PC-9 (cell line): ENCODE measurements at regions of chr2 and their contacts with region 1.

Region 1: DNA sequence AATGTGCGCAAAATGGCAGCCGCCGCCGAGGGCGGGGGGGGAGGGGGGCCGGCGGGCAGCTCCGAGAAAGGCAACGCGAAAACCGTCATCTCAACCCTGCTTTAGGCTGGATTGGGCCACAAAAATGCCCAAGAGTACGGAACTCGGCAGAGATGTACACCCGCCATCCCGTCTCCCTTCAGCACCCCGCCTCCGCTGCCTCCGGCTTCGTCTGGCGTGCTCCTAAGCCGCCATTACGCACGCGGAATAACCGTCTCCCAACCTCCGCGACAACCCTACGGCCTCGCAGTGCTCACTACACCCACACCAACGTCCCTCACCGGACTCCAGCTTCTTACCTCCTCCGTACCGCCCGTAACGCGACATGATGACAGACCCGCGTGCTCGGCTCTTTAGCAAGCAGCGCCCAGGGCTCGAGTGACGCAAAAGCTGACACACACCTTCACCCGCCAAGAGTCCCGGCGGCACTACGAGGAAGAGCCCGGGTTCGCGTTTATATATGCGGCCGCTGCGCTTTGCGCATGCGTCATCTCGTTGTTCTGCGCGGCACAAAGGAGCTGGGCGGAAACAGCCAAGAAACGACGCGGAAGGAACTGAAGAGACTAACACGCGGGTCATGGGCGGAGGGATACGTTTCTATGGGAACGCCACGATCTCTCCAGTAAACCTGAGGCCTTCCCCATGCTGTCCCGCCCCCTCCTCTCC is at the start of gene SRSF7:
- DNase-seq: peak; percentile 92 to 94
- H3K4me3 ChIP-seq: peak within 1 kb of the TSS; percentile 93
- H3K27ac ChIP-seq: peak within 1 kb of the TSS; percentile 88
- H3K4me1 ChIP-seq: peaks cover 27% of the 10 kb centered on the region
- H3K27me3 ChIP-seq: no peaks in the 10 kb centered on the region
- CTCF ChIP-seq: no peak
- total RNA-seq, gene SRSF7: 110 and 111 TPM in 2 replicates

Region 2: DNA sequence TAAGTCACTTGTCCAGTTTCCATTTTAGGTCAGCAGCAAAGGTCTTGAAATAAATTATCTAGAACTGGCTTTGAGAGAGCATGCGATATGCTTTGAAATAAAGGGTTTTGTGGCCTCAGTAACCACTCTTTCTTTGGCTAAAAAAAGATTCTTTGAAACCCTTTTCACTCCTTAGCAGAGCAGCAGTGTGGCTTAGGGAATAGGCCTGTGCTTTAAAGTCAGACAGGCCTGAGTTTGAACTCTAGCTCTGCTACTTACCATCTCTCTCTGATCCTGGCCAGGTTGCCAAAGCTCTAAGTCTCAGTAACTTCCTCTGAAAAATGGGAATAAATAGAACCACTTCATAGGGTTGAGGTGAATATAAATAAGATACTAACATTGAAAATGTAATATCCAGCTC is 1353.9 kb before region 1 on chr2:
- CTCF ChIA-PET with region 1: interaction called, 4 read pairs
- POLR2A ChIA-PET with region 1: interaction called, 16 read pairs
- intact Hi-C with region 1: no loop called
- DNase-seq: no peak
- H3K4me3 ChIP-seq: no peak overlapping the region
- H3K27ac ChIP-seq: no peak overlapping the region
- H3K4me1 ChIP-seq: 0 out of 2 replicates have a peak, but pooled peaks cover 4% of the 10 kb centered on the region
- H3K27me3 ChIP-seq: no peaks in the 10 kb centered on the region
- CTCF ChIP-seq: no peak

Region 3: DNA sequence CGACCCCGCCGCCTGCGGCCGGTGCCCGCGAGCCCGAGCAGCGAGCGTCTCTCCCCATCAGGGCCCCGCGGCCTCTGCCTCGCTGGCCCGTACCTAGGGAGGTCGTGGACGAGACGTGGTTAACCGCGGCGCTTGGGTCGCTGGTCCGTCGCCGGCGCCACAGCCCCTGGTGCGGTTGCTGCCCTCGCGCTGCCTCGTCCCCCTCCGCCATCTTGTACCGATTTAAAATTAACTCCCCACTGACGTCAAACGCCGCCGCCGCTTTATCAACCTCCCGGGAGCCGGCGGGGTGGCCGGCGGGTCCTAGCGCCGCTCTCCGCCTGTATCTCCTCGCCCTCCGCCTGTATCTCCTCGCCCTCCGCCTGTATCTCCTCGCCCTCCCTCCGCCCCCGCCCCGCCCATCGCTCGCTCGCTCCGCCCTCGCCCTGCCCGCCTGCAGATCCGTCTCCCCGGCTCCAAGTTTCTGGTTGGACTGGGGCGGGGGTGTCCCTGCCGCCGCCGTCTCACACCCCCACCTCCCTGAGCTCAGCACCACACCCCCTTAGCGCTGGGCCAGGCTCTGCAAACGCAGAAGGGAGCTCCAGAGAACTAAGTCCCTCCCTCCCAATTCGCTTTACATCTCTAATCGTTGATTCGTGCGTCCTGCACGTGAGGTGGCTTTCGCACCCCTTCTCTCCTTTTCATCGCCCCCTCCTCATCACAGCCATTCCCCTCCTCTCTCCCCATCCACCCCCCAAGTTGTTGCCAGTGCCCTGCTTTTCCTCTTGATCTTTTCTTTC is 373.8 kb before region 1 on chr2 and contains the start of gene ATL2:
- CTCF ChIA-PET with region 1: no interaction called
- POLR2A ChIA-PET with region 1: interaction called, 10 read pairs
- intact Hi-C with region 1: no loop called
- DNase-seq: peak; percentile 86 to 92
- H3K4me3 ChIP-seq: peak within 1 kb of the TSS; percentile 69
- H3K27ac ChIP-seq: peak within 1 kb of the TSS; percentile 78
- H3K4me1 ChIP-seq: peaks cover 28% of the 10 kb centered on the region
- H3K27me3 ChIP-seq: no peaks in the 10 kb centered on the region
- CTCF ChIP-seq: 0 out of 2 replicates have a peak, but pooled peaks have one; percentile 10
- total RNA-seq, gene ATL2: 66.4 and 75.3 TPM in 2 replicates

Region 4: GRCh38 chr2:38765149-38765548 is 14.1 kb after region 1 on chr2:
- CTCF ChIA-PET with region 1: no interaction called
- POLR2A ChIA-PET with region 1: interaction called, 15 read pairs
- intact Hi-C with region 1: no loop called
- DNase-seq: peak in 1 of 2 experiments; percentile 18
- H3K4me3 ChIP-seq: no peak overlapping the region
- H3K27ac ChIP-seq: no peak overlapping the region
- H3K4me1 ChIP-seq: peaks cover 20% of the 10 kb centered on the region
- H3K27me3 ChIP-seq: no peaks in the 10 kb centered on the region
- CTCF ChIP-seq: no peak

Region 5: DNA sequence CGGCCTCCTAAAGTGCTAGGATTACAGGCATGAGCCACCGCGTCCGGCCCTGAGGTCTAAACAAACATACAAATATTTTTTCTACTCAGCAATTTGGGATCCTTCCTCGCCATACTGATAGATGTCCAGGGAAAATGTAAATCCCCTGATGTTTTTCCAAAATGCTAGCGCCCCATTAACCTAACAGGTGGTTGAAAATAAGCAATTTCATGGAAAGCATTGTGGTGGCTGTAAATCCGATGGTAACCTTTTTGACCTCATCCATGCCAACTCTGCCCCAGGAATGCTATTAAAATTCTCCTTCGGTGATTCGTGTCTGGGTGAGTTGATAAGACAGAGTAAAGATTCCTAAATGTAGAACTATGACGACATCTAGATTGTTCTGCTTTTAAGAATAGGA is 46.2 kb after region 1 on chr2:
- CTCF ChIA-PET with region 1: no interaction called
- POLR2A ChIA-PET with region 1: interaction called, 12 read pairs
- intact Hi-C with region 1: no loop called
- DNase-seq: no peak
- H3K4me3 ChIP-seq: no peak overlapping the region
- H3K27ac ChIP-seq: no peak overlapping the region
- H3K4me1 ChIP-seq: no peaks in the 10 kb centered on the region
- H3K27me3 ChIP-seq: no peaks in the 10 kb centered on the region
- CTCF ChIP-seq: no peak

Region 6: DNA sequence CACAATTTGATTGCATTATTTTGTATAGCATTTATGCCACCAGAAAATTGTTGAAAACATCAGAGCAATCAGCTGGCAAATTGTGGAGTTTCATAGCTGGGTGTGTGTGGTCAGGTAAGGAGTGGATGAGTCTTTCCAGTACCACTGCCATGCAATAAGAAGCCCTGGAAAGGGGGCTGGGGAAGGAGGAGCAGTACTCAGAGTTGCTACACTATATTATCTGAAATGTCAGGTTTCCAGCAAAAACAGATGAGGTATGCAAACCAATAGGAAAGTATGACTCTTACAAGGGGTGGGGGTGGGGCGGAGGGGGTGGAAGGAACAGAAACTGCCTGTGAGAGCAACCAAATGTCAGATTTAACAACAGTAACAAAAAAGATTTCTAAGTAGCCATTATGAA is 257.6 kb after region 1 on chr2:
- CTCF ChIA-PET with region 1: no interaction called
- POLR2A ChIA-PET with region 1: interaction called, 13 read pairs
- intact Hi-C with region 1: no loop called
- DNase-seq: no peak
- H3K4me3 ChIP-seq: no peak overlapping the region
- H3K27ac ChIP-seq: no peak overlapping the region
- H3K4me1 ChIP-seq: no peaks in the 10 kb centered on the region
- H3K27me3 ChIP-seq: no peaks in the 10 kb centered on the region
- CTCF ChIP-seq: no peak

Region 7: GRCh38 chr2:39227628-39228412 is 476.8 kb after region 1 on chr2:
- CTCF ChIA-PET with region 1: no interaction called
- POLR2A ChIA-PET with region 1: interaction called, 4 read pairs
- intact Hi-C with region 1: loop called (anchors 5 kb)
- DNase-seq: peak; percentile 51 to 69
- H3K4me3 ChIP-seq: no peak overlapping the region
- H3K27ac ChIP-seq: no peak overlapping the region
- H3K4me1 ChIP-seq: no peaks in the 10 kb centered on the region
- H3K27me3 ChIP-seq: no peaks in the 10 kb centered on the region
- CTCF ChIP-seq: peak; percentile 92